SK-N-SH (cell line): ENCODE measurements at regions of chr2 and their contacts with region 1.

Region 1: DNA sequence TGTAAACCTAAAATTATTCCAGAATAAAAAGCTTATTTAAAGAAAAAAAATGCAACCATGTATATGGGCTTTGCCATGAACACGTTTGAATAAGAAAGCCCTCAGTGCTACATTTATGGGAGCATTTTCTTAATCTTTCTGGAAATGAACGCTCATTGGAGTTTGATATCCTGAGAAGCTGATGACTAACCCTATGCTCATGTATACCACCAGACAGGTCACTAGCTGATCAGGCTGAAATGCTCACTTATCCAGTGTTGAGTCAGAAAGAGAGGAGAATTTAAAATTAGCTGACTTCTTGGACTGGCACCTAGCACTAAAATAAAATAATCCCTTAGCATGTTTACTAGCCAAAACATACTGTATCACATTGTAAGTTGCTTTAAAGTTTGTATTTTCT is 254.9 kb upstream of the SIX3 start:
- DNase-seq: no peak
- H3K4me3 ChIP-seq: no peak overlapping the region
- H3K27ac ChIP-seq: peak overlapping the region; percentile 22 to 69; a peak in 3 of 4 replicates
- H3K4me1 ChIP-seq: peaks cover 4 to 75% of the 10 kb centered on the region in 2 experiments; a peak in 2 of 4 replicates
- H3K27me3 ChIP-seq: no peaks in the 10 kb centered on the region
- CTCF ChIP-seq: no peak
- EP300 ChIP-seq: no peak
- RAD21 ChIP-seq: no peak

Region 2: GRCh38 chr2:44700824-44701223 is 14.3 kb after region 1 on chr2:
- CTCF ChIA-PET with region 1: interaction called, 66 read pairs
- POLR2A ChIA-PET with region 1: interaction called, 26 read pairs
- DNase-seq: no peak
- H3K4me3 ChIP-seq: no peak overlapping the region
- H3K27ac ChIP-seq: no peak overlapping the region
- H3K4me1 ChIP-seq: peaks cover 0 to 27% of the 10 kb centered on the region in 2 experiments; a peak in 2 of 4 replicates
- H3K27me3 ChIP-seq: no peaks in the 10 kb centered on the region
- CTCF ChIP-seq: no peak
- EP300 ChIP-seq: no peak
- RAD21 ChIP-seq: no peak